Activated CD4-positive, alpha-beta memory T cell treated with anti-CD3 and anti-CD28 coated beads for 36 hours (primary cell): ENCODE measurements at regions of chr16 and their contacts with region 1.

Region 1: DNA sequence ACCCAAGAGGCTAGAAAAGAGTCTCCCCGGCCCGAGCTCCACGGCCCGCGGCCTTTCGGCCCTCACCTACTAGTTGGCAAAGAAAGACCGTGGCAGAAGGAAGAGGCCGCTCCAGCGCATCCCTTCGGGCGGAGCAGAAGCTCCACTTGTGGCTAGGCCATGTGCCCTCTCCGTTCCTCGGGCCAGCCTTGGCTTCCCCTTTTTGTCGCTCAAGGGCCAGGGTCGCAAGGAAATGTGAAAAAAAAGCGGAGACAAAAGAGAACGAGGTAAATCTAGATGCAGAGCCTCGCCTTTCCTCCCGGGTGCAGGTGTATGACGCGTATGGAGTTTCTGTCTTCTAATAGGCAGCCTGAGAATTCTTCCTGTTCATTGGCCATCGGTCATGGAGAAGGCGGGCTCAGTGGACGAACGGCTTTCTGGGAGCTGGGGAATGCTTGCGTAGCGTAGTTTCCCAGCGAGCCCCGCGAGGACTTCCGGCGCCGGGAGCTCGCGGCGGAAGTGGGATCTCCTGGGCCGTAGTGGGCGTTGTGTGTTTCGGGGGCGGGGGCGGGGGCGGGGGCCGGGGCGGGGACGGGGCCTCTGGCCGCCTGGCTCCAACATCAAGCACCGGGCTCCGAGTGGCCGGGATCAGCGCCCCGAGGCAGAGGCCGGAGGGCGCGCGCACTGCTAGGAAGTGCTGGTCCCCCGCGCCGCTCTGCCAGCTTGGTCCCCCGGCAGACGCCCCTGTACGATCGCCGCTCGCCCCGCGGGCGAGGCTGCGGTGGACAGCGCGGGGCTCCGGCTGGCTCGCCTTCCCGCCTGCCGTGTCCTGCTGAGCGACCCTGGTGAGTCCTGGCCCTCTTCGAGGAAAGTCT is at the start of gene ZNF213:
- DNase-seq: peak; percentile 96
- H3K4me3 Mint-ChIP-seq: peak within 1 kb of the TSS; percentile 96
- H3K27ac Mint-ChIP-seq: peak within 1 kb of the TSS; percentile 93
- H3K4me1 Mint-ChIP-seq: peaks cover 24% of the 10 kb centered on the region
- H3K27me3 Mint-ChIP-seq: no peaks in the 10 kb centered on the region
- total RNA-seq, gene ZNF213: 9.0 TPM

Region 2: GRCh38 chr16:3013491-3013951 is 121.3 kb before region 1 on chr16:
- CTCF ChIA-PET with region 1: no interaction called
- POLR2A ChIA-PET with region 1: no interaction called
- intact Hi-C with region 1: no loop called
- DNase-seq: no peak
- H3K4me3 Mint-ChIP-seq: no peak overlapping the region
- H3K27ac Mint-ChIP-seq: no peak overlapping the region
- H3K4me1 Mint-ChIP-seq: peaks cover 10% of the 10 kb centered on the region
- H3K27me3 Mint-ChIP-seq: peaks cover 8% of the 10 kb centered on the region

Region 3: DNA sequence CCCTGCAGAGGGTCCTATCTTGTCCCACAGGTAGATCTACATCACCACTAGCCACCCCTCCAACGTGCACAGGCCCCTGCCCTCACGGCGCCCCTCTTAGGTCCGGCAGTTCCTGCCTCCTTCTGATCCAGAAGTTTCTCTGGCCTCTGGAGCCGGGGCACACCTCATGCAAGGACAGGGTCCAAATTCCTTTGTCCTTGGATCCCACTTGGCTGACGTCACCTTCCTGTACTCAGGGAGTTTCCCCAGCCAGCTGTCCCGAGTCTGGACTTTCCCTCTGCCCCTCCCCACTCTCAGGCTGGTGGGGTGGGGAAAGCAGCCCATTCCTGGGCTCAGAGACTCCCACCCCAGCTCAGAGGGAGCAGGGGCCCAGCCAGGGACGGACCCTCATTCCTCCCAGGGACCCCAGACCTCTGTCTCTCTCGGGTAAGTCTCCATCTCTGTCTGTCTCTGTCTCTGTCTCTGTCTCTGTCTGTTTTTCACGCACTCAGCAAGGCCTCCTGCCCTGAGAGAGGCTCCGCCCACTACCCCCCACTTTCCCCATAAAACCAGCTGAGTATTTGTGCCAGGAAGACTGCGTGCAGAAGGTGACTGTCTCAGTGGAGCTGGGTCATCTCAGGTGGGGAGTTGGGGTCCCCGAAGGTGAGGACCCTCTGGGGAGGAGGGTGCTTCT is 69.6 kb before region 1 on chr16 and contains the start of gene IL32:
- CTCF ChIA-PET with region 1: interaction called, 270 read pairs
- POLR2A ChIA-PET with region 1: interaction called, 17 read pairs
- intact Hi-C with region 1: no loop called
- DNase-seq: peak; percentile 87
- H3K4me3 Mint-ChIP-seq: peak within 1 kb of the TSS; percentile 99
- H3K27ac Mint-ChIP-seq: peak within 1 kb of the TSS; percentile 100
- H3K4me1 Mint-ChIP-seq: peaks cover 67% of the 10 kb centered on the region
- H3K27me3 Mint-ChIP-seq: peaks cover 4% of the 10 kb centered on the region
- total RNA-seq, gene IL32: 2,504 to 2,532 TPM

Region 4: DNA sequence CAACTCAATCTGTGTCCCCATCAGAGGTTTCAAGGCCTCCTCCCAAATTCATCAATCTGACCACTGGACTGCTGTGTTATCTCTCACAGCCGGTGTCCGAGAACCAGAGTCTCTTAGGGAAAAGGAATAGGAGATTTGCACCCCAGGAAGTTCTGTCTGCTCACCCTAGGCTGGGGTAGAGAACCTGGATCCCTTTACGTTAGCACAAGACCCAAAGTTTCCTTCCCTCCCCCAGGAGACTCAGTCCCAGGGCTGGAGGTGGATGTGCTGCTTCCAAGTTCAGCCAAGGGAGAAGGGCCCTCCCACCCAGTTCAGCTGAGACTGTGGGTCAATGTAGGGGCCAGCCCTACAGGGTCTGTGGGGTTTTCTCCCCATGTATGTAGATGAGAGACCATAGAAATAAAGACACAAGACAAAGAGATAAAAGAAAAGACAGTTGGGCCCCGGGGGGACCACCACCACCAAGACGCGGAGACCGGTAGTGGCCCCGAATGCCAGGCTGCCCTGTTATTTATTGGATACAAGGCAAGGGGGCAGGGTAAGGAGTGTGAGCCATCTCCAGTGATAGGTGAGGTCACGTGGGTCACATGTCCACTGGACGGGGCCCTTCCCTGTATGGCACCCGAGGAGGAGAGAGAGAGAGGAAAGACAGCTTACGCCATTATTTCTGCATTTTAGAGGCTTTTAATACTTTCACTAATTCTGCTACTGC is 30.5 kb after region 1 on chr16:
- CTCF ChIA-PET with region 1: interaction called, 25 read pairs
- POLR2A ChIA-PET with region 1: interaction called, 8 read pairs
- intact Hi-C with region 1: loop called (anchors 1 kb)
- DNase-seq: no peak
- H3K4me3 Mint-ChIP-seq: no peak overlapping the region
- H3K27ac Mint-ChIP-seq: peak overlapping the region; percentile 18
- H3K4me1 Mint-ChIP-seq: peaks cover 13% of the 10 kb centered on the region
- H3K27me3 Mint-ChIP-seq: no peaks in the 10 kb centered on the region

Region 5: DNA sequence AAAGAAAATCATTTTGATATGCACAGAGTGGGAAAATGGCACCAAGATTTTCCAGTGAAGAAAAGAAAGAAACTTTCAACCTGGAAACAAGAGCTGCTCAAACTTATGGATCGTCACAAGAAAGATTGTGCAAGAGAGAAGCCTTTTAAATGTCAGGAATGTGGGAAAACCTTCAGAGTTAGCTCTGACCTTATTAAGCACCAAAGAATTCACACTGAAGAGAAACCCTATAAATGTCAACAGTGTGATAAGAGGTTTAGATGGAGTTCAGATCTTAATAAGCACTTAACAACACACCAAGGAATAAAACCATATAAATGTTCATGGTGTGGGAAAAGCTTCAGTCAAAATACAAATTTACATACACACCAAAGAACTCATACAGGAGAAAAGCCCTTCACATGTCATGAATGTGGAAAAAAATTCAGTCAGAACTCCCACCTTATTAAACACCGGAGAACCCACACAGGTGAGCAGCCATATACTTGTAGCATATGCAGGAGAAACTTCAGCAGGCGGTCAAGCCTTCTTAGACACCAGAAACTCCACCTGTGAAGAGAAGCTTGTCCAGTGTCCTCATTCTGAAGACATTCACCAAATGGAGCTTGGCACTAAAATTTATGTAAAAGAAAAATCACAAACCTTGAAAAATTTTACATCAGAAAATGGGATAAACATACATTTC is 182.7 kb after region 1 on chr16:
- CTCF ChIA-PET with region 1: no interaction called
- POLR2A ChIA-PET with region 1: no interaction called
- intact Hi-C with region 1: no loop called
- DNase-seq: no peak
- H3K4me3 Mint-ChIP-seq: no peak overlapping the region
- H3K27ac Mint-ChIP-seq: no peak overlapping the region
- H3K4me1 Mint-ChIP-seq: no peaks in the 10 kb centered on the region
- H3K27me3 Mint-ChIP-seq: no peaks in the 10 kb centered on the region